Caco-2 (cell line): ENCODE measurements at regions of chr13 and their contacts with region 1.

Region 1: DNA sequence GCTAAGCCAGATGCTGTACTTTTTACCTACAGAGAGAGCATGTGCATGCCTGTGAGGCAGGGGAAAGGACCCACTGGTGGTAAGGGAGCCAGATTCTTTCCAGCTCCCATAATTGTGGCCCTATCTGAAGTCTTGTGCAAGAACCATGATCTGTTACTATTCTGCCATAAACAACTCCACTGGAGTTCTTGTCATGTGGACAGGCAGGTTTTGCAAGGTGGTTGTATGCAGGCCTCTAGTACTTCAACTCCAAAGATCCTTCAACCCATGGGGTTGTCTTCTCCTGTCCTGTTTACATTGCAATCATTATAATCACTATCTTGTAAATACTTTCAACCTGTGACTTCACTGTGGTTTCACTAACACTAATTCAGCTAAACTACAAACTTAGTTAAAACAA is 14.1 kb downstream of the PROSER1 start:
- DNase-seq: peak; percentile 83 to 87
- H3K4me3 ChIP-seq: no peak overlapping the region
- H3K4me3 Mint-ChIP-seq: peak overlapping the region; percentile 34
- H3K27ac Mint-ChIP-seq: peak overlapping the region; percentile 82
- H3K4me1 ChIP-seq: peaks cover 35% of the 10 kb centered on the region
- H3K4me1 Mint-ChIP-seq: peaks cover 26% of the 10 kb centered on the region
- H3K27me3 ChIP-seq: no peaks in the 10 kb centered on the region
- H3K27me3 Mint-ChIP-seq: no peaks in the 10 kb centered on the region
- CTCF ChIP-seq: no peak

Region 2: GRCh38 chr13:39037880-39038568 is 14.2 kb after region 1 on chr13 and contains the starts of genes NHLRC3 and PROSER1:
- CTCF ChIA-PET with region 1: interaction called, 5 read pairs
- POLR2A ChIA-PET with region 1: interaction called, 11 read pairs
- intact Hi-C with region 1: loop called (anchors 1 kb)
- DNase-seq: peak; percentile 93 to 97
- H3K4me3 ChIP-seq: peak within 1 kb of the TSS; percentile 84
- H3K4me3 Mint-ChIP-seq: peak within 1 kb of the TSS; percentile 94
- H3K27ac Mint-ChIP-seq: peak within 1 kb of the TSS; percentile 84
- H3K4me1 ChIP-seq: peaks cover 10% of the 10 kb centered on the region; the same call in 1 of the 2 replicates
- H3K4me1 Mint-ChIP-seq: peaks cover 13% of the 10 kb centered on the region
- H3K27me3 ChIP-seq: no peaks in the 10 kb centered on the region
- H3K27me3 Mint-ChIP-seq: no peaks in the 10 kb centered on the region
- CTCF ChIP-seq: no peak
- total RNA-seq, gene NHLRC3: 35.8 and 38.1 TPM in 2 replicates
- total RNA-seq, gene PROSER1: 75.6 and 85.0 TPM in 2 replicates

Region 3: DNA sequence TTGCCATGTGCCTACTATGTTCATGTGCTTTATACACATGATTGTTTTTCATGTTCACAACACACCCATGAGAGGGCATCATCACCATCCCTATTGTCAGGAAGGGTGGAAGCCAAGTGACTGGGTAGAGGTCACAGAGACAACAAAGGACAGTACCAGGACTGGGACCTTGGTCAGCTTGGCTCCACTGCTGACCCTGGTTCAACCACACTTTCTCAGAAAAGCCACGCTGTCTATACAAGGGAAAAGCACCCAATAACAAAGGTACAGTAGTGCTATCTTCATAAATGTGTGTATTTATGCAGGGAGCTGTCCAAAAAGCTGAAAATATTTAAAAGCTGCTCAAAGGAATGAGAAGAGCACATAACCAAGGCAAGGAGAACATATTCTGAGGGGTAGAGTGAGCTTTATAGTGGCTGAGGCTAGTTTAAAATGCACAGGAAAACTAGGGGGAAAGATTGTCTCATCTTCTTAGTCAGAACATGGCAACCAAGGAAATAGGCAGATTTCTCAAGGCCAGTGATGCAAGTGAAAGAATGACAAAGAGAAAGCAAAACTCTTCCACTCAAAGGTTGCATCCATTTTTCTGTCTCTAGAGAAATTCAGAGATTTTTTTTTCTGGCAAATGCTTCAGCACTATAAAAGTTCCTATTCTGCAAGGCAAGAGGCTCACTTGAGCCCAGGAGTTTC is 1227.7 kb after region 1 on chr13:
- CTCF ChIA-PET with region 1: no interaction called
- POLR2A ChIA-PET with region 1: no interaction called
- intact Hi-C with region 1: no loop called
- DNase-seq: no peak
- H3K4me3 ChIP-seq: no peak overlapping the region
- H3K4me3 Mint-ChIP-seq: no peak overlapping the region
- H3K27ac Mint-ChIP-seq: no peak overlapping the region
- H3K4me1 ChIP-seq: peaks cover 6% of the 10 kb centered on the region; the same call in 1 of the 2 replicates
- H3K4me1 Mint-ChIP-seq: no peaks in the 10 kb centered on the region
- H3K27me3 ChIP-seq: no peaks in the 10 kb centered on the region
- H3K27me3 Mint-ChIP-seq: no peaks in the 10 kb centered on the region
- CTCF ChIP-seq: no peak